WTC11 (cell line): ENCODE measurements at regions of chr18 and their contacts with region 1.

Region 1: DNA sequence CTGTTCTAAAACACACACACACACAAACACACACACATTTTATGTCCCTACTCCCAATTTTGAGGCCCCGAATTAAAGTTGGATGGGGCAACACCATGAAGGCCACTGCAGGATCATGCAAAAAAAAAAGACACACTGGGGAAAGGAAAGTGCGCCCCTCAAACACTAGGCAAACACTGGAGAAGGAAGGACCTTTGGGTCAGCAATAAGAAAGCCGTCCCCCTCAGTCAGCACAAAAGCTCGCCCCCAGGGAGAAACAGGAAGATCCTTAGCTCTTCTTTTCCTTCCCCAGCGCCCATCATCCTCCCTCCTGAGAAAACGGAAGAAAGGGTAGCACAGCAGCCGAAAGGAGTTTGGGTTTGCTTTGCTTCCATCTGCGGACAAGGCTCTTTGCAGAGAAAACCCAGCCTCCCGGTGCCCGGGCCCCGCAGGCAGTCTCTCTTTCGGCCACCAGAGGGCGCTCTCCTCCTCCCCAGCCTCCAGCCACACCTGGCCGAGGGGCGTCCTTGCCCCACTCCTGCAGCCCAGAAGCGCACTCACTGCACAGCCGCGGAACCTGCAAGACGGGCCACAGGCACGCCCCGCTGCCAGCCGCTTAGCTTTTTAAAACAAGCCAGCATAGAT is 248.5 kb downstream of the CDH20 start:
- DNase-seq: peak; percentile 93
- ATAC-seq: peak; percentile 98
- H3K4me3 Mint-ChIP-seq: peak overlapping the region; percentile 80
- H3K27ac Mint-ChIP-seq: peak overlapping the region; percentile 11; the same call in 1 of the 2 replicates
- H3K4me1 Mint-ChIP-seq: peaks cover 12% of the 10 kb centered on the region
- H3K27me3 Mint-ChIP-seq: peaks cover 16% of the 10 kb centered on the region
- CTCF ChIP-seq: peak; percentile 99

Region 2: DNA sequence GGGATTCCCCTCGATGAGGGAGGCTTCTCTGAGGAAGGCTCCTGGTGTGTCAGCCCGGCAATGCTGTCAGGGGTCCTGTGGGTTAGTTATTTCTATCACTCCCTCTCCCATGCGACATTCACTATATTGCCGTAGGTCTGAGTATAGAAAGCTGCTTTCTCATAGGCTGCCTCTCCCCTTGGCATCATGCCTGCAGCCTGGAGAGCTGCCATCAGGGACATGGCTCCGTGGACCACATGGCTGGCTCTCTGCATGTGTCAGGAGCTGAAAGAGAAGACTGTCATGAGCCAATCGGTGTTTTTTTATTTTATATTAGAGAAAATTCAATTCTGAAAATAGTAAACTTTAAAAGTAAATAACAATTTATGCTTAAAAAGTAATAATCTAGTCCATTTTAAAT is 50.5 kb before region 1 on chr18:
- CTCF ChIA-PET with region 1: no interaction called
- POLR2A ChIA-PET with region 1: no interaction called
- DNase-seq: no peak
- ATAC-seq: peak; percentile 22; the same call in 1 of the 2 replicates
- H3K4me3 Mint-ChIP-seq: no peak overlapping the region
- H3K27ac Mint-ChIP-seq: no peak overlapping the region
- H3K4me1 Mint-ChIP-seq: no peaks in the 10 kb centered on the region
- H3K27me3 Mint-ChIP-seq: no peaks in the 10 kb centered on the region
- CTCF ChIP-seq: no peak

Region 3: GRCh38 chr18:61606759-61607158 is 25.1 kb after region 1 on chr18:
- CTCF ChIA-PET with region 1: interaction called, 10 read pairs
- POLR2A ChIA-PET with region 1: no interaction called
- DNase-seq: peak; percentile 43
- ATAC-seq: peak; percentile 92
- H3K4me3 Mint-ChIP-seq: peak overlapping the region; percentile 58
- H3K27ac Mint-ChIP-seq: peak overlapping the region; percentile 94
- H3K4me1 Mint-ChIP-seq: peaks cover 47% of the 10 kb centered on the region
- H3K27me3 Mint-ChIP-seq: no peaks in the 10 kb centered on the region; the same call in 1 of the 2 replicates
- CTCF ChIP-seq: no peak

Region 4: DNA sequence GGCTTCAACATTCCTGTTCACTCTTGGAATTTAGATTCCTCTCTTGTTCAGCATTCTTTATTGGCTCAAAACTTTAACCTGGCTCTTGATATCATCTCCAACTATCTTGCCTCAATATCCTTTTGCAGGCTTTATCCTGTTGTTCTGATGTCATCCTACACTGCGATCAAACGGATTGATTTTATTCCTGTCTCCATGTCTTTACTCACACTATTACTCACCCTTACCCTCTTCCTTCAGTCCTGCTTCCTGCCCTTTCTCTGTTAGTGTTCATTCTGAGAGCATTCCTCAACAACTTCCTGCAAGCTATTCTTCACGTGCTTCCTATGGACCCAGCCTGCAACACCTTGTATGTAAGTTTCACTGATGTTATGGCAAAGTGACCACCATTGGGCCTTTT is 46.4 kb after region 1 on chr18:
- CTCF ChIA-PET with region 1: no interaction called
- POLR2A ChIA-PET with region 1: no interaction called
- DNase-seq: no peak
- ATAC-seq: no peak
- H3K4me3 Mint-ChIP-seq: no peak overlapping the region
- H3K27ac Mint-ChIP-seq: no peak overlapping the region
- H3K4me1 Mint-ChIP-seq: no peaks in the 10 kb centered on the region
- H3K27me3 Mint-ChIP-seq: peaks cover 14% of the 10 kb centered on the region
- CTCF ChIP-seq: no peak